ENCODE measurements at regions of chr12 and their contacts with region 1.

Region 1: GRCh38 chr12:129179941-129180553 is 326.8 kb downstream of the GLT1D1 start:
- DNase-seq: no peak
- ATAC-seq: no peak
- H3K4me3 ChIP-seq: no peak overlapping the region
- H3K27ac ChIP-seq: no peak overlapping the region
- H3K4me1 ChIP-seq: no peaks in the 10 kb centered on the region
- H3K27me3 ChIP-seq: peaks cover 0 to 11% of the 10 kb centered on the region in 2 experiments; a peak in 1 of 5 replicates
- CTCF ChIP-seq: no peak
- EP300 ChIP-seq: no peak
- POLR2A ChIP-seq: no peak
- RAD21 ChIP-seq: no peak

Region 2: GRCh38 chr12:128872303-128872702 is 307.7 kb before region 1 on chr12:
- CTCF ChIA-PET with region 1: no interaction called
- POLR2A ChIA-PET with region 1: no interaction called
- in situ Hi-C with region 1: no loop called
- intact Hi-C with region 1: no loop called
- DNase-seq: no peak
- ATAC-seq: no peak
- H3K4me3 ChIP-seq: no peak overlapping the region
- H3K27ac ChIP-seq: no peak overlapping the region
- H3K4me1 ChIP-seq: peaks cover 11% of the 10 kb centered on the region
- H3K27me3 ChIP-seq: no peaks in the 10 kb centered on the region
- CTCF ChIP-seq: no peak
- EP300 ChIP-seq: no peak
- POLR2A ChIP-seq: no peak
- RAD21 ChIP-seq: no peak

Region 3: DNA sequence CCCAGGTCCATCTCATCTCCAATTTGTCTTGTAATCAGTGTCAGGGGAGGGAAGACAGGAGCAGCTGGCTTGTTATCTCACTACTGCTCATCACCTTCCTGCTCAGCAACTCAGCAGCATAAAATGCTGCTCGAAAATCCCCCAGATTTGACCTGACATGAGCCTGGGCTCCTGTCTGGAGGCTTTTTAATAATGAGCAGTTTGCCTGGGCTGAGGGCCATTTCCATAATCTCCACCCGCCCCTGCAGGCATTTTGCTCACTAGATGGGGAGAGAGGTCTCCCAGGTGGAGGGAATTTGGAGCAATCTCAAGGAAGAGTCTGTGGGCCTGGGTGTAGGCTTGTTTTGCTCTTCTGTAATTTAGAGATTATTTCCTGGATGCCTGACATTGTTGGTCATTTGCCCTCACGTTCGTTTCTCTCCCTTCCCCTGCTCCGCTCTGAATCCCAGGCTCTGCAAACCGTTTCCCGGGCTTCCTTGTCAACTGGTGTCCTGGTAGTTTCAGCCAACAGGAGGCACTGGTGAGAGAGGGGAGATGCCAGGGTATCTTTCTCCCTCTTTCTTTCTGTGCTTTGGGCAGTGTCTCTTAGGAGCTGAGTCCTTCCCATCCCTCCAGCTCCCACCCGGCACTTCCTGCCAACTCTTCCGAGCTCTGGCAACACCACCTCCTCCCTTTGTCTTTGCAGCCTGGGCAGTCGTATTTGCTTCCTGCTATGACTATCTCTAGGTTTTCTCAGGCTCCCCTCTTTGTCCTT is 27.5 kb before region 1 on chr12:
- CTCF ChIA-PET with region 1: no interaction called
- POLR2A ChIA-PET with region 1: no interaction called
- in situ Hi-C with region 1: no loop called
- intact Hi-C with region 1: loop called (anchors 1 kb)
- DNase-seq: no peak
- ATAC-seq: no peak
- H3K4me3 ChIP-seq: no peak overlapping the region
- H3K27ac ChIP-seq: no peak overlapping the region
- H3K4me1 ChIP-seq: no peaks in the 10 kb centered on the region
- H3K27me3 ChIP-seq: peaks cover 0 to 25% of the 10 kb centered on the region in 2 experiments; a peak in 3 of 5 replicates
- CTCF ChIP-seq: no peak
- EP300 ChIP-seq: no peak
- POLR2A ChIP-seq: no peak
- RAD21 ChIP-seq: no peak